ENCODE measurements at regions of chr9 and their contacts with region 1.

Region 1: GRCh38 chr9:21455320-21455719 is 15.1 kb downstream of the IFNA1 start:
- DNase-seq: no peak
- H3K4me3 ChIP-seq: no peak overlapping the region
- CTCF ChIP-seq: peak; percentile 66

Region 2: DNA sequence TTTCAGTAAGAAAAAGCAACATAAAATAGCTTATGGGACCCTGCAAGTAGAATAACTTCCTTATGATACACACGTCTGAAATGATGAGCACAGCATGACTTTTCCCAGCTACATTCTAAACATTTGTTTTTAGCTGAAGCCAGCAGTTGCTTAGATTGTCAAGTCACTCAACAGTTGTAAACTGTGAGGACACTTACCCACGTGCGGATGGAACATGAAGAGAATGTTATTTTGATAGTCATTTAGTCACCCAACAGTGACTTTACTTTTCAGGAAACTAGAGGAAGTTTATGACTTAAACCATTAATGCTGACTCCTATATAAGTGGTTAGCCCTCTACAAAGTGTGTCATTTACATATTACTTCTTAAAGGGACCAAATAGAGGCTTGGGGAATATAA is 426.9 kb before region 1 on chr9:
- CTCF ChIA-PET with region 1: no interaction called
- POLR2A ChIA-PET with region 1: no interaction called
- DNase-seq: no peak
- H3K4me3 ChIP-seq: no peak overlapping the region
- CTCF ChIP-seq: no peak

Region 3: GRCh38 chr9:21144603-21145002 is 310.7 kb before region 1 on chr9:
- CTCF ChIA-PET with region 1: no interaction called
- POLR2A ChIA-PET with region 1: no interaction called
- DNase-seq: no peak
- H3K4me3 ChIP-seq: no peak overlapping the region
- CTCF ChIP-seq: no peak

Region 4: GRCh38 chr9:21252721-21253547 is 202.4 kb before region 1 on chr9:
- CTCF ChIA-PET with region 1: interaction called, 11 read pairs
- POLR2A ChIA-PET with region 1: no interaction called
- DNase-seq: no peak
- H3K4me3 ChIP-seq: no peak overlapping the region
- CTCF ChIP-seq: peak; percentile 30

Region 5: DNA sequence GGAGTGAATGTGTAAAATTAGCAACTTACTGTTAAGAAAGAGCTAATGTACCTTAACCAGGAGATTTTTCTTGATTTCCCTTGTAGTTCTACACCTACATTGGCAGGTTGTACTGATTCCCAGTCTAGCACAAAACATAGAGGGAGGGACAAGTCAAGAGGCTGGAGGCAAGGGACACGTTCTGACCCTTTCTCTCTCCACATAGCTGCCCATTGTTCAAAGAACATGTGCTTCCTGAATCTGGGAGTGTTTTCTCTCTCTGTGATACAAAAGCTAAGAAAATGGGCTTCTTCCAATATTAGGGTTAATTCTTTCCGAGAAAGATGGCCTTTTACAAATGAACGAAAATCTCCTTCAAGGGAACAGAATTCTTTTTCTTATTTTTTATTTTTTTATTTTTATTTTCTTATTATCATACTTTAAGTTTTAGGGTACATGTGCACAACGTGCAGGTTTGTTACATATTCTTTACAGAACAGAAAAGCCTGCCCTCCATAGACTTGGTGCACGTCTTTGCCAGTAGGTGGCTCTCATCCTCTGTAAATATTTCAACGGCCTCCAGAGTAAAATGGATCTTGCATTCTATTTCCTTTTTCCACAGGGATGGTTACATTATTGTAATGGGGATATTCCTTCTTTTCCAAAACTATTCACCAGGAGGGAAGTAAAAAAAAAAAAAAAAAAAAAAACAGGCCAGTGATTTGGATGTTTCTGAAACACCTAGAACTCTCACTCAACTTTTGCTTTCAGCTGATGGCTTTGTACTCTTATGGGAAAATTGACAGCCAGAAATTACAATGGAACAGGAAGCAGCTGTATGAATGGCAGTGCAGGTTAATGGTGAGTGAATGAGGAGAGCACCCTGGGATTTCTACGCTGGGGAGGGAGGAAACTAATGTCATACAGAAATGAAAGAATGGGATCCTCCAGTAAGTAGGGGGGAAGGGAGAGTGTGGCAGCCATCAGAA is 137.1 kb before region 1 on chr9:
- CTCF ChIA-PET with region 1: interaction called, 42 read pairs
- POLR2A ChIA-PET with region 1: no interaction called
- DNase-seq: no peak
- H3K4me3 ChIP-seq: no peak overlapping the region
- CTCF ChIP-seq: peak; percentile 71

Region 6: DNA sequence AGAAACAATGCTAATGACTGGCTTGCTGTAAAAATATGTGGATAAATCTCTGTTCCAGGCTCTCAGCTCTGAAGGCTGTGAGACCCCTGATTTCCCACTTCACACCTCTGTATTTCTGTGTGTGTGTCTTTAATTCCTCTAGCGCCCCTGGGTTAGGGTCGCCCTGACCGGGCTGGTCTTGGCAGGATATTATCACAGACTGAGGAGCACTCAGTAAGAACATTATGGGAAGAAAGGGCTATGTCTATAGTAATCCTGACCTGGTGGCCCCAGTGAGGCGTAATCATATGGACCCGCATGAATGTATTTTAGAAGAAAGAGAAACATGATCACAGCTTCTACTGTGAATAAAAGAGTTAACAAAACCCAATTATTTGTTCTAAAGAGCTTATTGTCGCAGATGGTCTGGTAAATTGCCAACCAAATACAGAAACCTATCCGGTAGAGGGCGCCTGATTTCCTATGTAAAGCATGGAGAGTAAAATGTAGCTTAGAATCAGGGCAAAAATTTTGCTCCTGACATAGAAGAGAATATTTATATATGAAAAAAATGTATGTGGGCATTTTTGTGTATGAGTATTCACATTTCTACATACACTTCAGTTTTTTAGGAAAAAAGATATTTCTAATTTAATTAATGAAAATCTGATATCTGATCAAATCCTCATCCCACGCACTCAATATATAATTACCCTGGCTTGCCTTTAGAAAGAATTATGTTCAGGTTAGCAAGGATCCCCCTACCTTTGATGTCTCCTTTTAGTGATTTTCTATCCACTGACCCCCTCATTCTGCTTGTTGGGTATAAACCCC is 20.9 kb before region 1 on chr9:
- CTCF ChIA-PET with region 1: interaction called, 20 read pairs
- POLR2A ChIA-PET with region 1: no interaction called
- DNase-seq: peak; percentile 23
- H3K4me3 ChIP-seq: no peak overlapping the region
- CTCF ChIP-seq: peak; percentile 53

Region 7: GRCh38 chr9:21479152-21479702 is 23.9 kb after region 1 on chr9:
- CTCF ChIA-PET with region 1: no interaction called
- POLR2A ChIA-PET with region 1: no interaction called
- DNase-seq: no peak
- H3K4me3 ChIP-seq: no peak overlapping the region
- CTCF ChIP-seq: no peak

Region 8: DNA sequence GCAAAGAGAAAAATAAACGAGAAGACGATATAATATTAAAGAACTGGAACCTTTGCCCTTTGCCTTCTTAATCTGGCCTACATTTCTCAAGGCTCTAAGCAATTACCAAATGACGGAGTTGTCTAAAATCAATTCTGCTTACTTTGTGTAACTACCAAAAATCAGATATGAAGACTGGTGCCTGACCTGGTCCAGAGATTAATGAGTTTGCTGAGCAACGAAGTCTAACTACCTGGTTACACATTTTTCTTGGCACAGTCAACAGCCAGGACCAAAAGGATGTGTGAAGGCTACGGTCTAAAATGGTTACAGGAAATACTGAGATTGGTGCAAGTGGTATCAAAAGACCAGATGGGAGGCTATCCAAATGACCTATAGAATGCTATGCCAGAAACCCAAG is 44.6 kb after region 1 on chr9:
- CTCF ChIA-PET with region 1: no interaction called
- POLR2A ChIA-PET with region 1: no interaction called
- DNase-seq: no peak
- H3K4me3 ChIP-seq: no peak overlapping the region
- CTCF ChIP-seq: no peak